Right cardiac atrium (tissue), 5 donors: ENCODE measurements at regions of chr18 and their contacts with region 1.

Region 1: DNA sequence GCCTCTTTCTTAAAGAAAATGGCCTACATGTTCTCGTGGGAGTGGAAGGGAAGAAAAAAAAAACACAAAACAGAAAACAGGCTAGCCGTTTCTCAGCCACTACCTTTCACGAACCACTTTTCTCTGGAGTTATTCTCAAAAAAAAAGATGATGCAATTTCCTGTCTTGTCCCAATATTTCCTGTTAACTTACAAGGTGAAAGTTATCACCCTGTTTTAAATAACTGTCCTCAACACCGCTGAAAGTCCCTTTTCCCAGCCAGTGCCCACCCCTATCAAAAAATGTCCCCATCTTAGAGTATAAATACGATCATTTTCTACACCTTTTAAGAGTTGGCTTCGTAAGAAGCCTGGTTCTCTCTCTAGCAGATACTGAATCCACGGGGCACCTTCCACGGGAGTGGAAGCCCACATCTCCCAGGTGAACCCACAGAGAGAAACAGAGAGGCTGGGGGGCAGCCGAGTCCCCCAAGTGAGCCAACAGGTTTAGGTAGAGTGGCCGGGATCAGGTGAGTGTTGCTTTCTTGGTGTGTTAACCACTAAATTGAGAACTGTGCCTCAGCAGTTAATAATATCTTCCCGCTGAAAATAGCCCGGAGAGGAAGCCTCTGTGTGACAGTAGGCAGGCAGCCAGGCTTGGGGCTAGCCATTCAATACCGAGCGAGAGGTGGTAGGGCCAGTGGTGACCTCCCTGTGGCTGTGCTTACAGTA is 15.9 kb downstream of the SMAD7 start:
- DNase-seq: peak; percentile 79 to 93 (median 87)
- ATAC-seq: peak; percentile 53 to 54
- H3K4me3 ChIP-seq: peak overlapping the region; percentile 19
- H3K27ac ChIP-seq: peak overlapping the region; percentile 98
- H3K4me1 ChIP-seq: peaks cover 67% of the 10 kb centered on the region
- H3K27me3 ChIP-seq: no peaks in the 10 kb centered on the region

Region 2: GRCh38 chr18:48680339-48681221 is 254.3 kb before region 1 on chr18:
- intact Hi-C with region 1: loop called in 1 of 4 experiments (anchors 10 kb)
- DNase-seq: peak; percentile 95 to 98 (median 97)
- ATAC-seq: peak; percentile 95
- H3K4me3 ChIP-seq: no peak overlapping the region
- H3K27ac ChIP-seq: peak overlapping the region; percentile 93
- H3K4me1 ChIP-seq: peaks cover 24% of the 10 kb centered on the region
- H3K27me3 ChIP-seq: no peaks in the 10 kb centered on the region

Region 3: DNA sequence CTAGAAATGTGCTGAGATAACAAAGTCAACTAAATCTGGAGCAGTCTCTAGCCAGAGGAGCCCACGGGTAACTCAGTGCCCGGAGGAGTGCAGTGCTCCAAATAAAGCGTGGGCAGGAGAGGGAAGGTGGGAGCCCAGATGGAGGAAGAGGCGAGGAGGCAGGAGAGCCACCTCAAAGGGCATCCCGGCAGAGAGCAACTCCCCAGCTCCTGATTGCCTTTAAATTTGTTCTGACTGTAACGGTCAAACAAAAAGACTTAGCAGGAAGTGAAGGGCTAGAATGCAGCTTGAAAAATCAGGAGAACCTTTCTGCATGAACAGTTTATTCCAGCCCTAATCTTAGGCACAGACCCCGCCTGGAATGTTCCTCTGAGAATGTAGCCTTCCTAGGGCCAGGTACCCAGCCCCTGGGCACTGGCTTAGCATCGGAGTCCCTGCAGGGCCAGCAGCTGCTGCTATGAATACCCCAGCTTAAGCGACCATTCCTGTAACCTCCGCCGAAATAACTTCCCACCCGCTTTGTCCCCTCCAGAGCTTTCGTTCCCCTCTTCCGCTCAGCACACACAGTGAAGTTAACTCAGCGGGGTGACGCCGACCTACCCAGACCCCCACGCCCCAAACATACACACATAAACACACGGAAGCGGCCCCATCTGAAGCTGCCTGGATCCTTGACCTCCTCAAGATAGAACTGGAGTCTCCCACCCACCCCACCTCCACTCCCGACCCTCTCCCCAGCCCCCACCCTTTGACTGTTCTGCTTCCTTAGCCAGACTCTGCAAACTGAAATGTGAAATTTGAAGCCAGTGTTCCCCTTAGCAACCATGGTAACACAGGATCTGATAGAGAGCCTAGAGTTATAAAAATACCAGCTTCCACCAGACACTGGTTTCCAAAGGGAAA is 107.3 kb before region 1 on chr18:
- intact Hi-C with region 1: loop called in 3 of 4 experiments (anchors 10 kb)
- DNase-seq: peak in 2 of 3 donors; percentile 8 to 56
- ATAC-seq: peak; percentile 67 to 69
- H3K4me3 ChIP-seq: peak overlapping the region; percentile 9
- H3K27ac ChIP-seq: peak overlapping the region; percentile 80
- H3K4me1 ChIP-seq: peaks cover 40% of the 10 kb centered on the region
- H3K27me3 ChIP-seq: no peaks in the 10 kb centered on the region

Region 4: DNA sequence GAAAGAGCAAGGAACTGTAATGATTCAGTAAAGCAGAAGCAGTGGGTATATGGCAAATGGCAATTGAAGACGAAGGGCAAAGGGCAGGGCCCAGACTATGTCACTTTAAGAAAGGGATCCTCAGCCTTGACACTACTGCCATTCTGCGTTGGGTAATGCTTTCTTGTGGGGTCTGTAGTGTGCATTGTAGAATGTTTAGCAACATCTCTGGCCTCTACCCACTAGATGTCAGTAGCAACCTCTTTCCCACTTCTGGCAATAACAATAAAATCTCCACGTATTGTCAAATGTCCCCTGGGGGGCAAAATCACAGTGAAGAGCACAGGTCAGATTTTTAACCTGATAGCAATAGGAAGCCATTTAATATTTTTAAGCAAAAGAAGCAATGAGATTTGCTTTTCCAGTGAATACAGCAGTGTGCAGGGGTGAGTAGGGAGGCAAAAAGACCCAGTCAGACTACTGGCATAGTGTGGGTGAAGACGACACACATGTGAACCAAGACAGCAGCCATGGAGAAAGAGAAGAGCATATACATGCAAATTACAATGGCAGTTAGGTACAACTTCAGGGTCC is 316.0 kb after region 1 on chr18:
- intact Hi-C with region 1: no loop called
- DNase-seq: no peak
- ATAC-seq: peak in 1 of 2 donors; percentile 56
- H3K4me3 ChIP-seq: no peak overlapping the region
- H3K27ac ChIP-seq: no peak overlapping the region
- H3K4me1 ChIP-seq: no peaks in the 10 kb centered on the region
- H3K27me3 ChIP-seq: no peaks in the 10 kb centered on the region

Region 5: DNA sequence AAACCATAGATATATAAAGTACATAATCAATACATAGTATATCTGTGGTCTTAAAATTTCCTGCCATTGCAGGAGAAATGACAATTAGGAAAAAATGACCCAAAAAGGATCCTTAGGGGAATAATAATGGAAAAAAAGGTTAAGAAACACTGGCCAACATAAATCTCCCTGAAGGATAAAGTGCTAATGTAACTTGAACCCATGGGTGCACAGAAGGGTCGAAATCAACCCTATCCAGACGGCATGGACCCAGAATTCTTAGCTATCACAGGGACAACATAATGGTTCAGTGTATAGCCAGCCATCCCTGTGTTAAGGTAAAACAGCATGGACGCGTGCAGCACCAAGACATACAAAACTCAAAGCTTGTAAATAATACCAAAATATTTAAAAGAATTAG is 374.8 kb after region 1 on chr18:
- intact Hi-C with region 1: no loop called
- DNase-seq: no peak
- ATAC-seq: no peak
- H3K4me3 ChIP-seq: no peak overlapping the region
- H3K27ac ChIP-seq: no peak overlapping the region
- H3K4me1 ChIP-seq: no peaks in the 10 kb centered on the region
- H3K27me3 ChIP-seq: no peaks in the 10 kb centered on the region